ENCODE measurements at regions of chr2 and their contacts with region 1.

Region 1: GRCh38 chr2:73100956-73101355 is 11.8 kb downstream of the RAB11FIP5 start:
- DNase-seq: no peak
- H3K4me3 Mint-ChIP-seq: no peak overlapping the region
- H3K27ac Mint-ChIP-seq: no peak overlapping the region
- H3K4me1 Mint-ChIP-seq: peaks cover 24% of the 10 kb centered on the region
- H3K27me3 Mint-ChIP-seq: no peaks in the 10 kb centered on the region
- CTCF ChIP-seq: no peak

Region 2: DNA sequence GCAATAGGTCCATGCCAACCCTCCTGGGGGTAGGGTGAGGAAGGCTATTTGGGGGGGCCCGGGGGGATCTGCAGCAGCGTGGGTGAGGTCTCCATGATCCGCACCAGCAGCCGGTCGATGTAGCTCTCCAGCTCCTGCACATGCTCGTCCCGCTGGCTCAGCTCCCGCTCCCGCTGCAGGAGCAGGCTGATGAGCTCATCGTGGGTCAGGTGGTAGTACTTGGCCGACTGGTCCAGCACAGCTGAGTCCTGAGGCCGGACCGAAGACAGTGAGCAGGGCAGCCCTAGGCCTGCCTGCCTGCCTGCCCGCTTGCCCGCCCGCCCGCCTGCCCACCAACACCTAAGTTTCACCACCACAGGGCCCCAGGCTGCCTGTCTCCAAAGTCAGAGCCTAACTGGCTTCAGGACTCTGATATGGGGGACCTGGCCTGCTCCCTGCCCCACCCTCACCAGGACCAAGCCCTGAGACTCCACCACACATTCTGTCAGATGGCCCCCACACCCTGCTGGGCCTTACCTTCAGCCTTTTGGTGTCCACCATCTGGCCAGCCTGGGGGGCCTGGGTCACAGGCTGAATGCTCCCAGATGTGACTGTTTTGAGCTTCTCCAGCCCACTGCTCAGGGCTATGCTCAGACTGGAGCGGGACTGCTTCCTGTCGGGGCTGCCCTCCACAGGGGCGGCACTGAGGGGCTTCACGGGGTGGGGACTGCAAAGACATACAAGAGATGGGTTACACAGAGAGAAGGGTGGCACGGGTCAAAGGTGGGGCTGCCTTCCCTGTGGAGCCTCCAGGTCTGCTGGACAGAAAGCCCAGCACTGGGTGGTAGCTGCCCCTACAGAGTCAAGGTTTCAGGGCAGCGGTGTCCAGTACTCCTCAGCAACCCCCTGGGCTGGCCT is 25.2 kb before region 1 on chr2:
- CTCF ChIA-PET with region 1: no interaction called
- POLR2A ChIA-PET with region 1: no interaction called
- intact Hi-C with region 1: no loop called
- DNase-seq: no peak
- H3K4me3 Mint-ChIP-seq: no peak overlapping the region
- H3K27ac Mint-ChIP-seq: no peak overlapping the region
- H3K4me1 Mint-ChIP-seq: peaks cover 7% of the 10 kb centered on the region
- H3K27me3 Mint-ChIP-seq: no peaks in the 10 kb centered on the region
- CTCF ChIP-seq: no peak

Region 3: GRCh38 chr2:73163483-73164367 is 62.8 kb after region 1 on chr2:
- CTCF ChIA-PET with region 1: interaction called, 11 read pairs
- POLR2A ChIA-PET with region 1: no interaction called
- intact Hi-C with region 1: no loop called
- DNase-seq: peak; percentile 72
- H3K4me3 Mint-ChIP-seq: no peak overlapping the region
- H3K27ac Mint-ChIP-seq: no peak overlapping the region
- H3K4me1 Mint-ChIP-seq: no peaks in the 10 kb centered on the region
- H3K27me3 Mint-ChIP-seq: peaks cover under 1% of the 10 kb centered on the region
- CTCF ChIP-seq: peak; percentile 91

Region 4: DNA sequence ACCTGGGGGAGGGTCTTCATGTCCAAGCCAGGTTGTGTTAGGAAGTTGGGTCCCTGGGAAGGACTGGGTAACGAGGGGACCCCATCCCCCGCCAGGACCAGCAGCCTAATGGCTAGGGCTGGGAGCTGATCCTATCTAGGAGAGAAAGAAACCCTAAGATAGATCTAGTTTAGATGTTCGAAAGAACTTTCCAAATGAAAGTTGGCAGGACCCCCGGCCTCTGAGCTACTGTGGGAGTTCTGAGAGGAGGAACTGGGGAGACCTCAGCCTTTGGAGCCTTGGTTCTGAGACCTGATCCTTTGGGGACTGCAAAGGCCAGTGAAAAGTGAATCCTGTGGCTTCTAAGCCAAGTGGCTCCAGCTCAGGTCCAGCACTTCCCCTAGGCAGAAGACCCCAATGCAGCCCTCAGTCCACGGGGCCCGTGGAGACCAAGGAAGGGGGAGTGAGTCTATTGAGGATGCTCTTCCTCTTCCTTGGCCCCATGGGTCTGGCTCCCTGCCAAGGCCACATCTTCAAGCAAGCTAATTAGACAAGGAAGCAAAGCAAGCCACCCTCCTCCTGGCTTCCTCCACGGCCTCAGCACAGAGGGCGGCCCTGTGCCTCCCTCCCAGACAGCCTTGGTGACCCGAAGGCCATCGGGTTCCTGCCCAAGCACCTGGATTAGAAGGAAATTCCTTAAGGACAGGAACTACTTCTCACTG is 156.6 kb after region 1 on chr2:
- CTCF ChIA-PET with region 1: no interaction called
- POLR2A ChIA-PET with region 1: no interaction called
- intact Hi-C with region 1: no loop called
- DNase-seq: no peak
- H3K4me3 Mint-ChIP-seq: no peak overlapping the region
- H3K27ac Mint-ChIP-seq: no peak overlapping the region
- H3K4me1 Mint-ChIP-seq: no peaks in the 10 kb centered on the region
- H3K27me3 Mint-ChIP-seq: no peaks in the 10 kb centered on the region
- CTCF ChIP-seq: no peak

Measured in MCF 10A (cell line).